ENCODE measurements at regions of chr20 and their contacts with region 1.

Region 1: GRCh38 chr20:62603021-62603906 is 39.0 kb upstream of the SLCO4A1 start:
- DNase-seq: peak; percentile 54 to 61
- ATAC-seq: peak; percentile 67 to 93 (median 76)
- H3K4me3 ChIP-seq: peak overlapping the region in 3 of 10 donors; percentile 2 to 41 (median 15)
- H3K27ac ChIP-seq: peak overlapping the region in 9 of 10 donors; percentile 9 to 86 (median 32)
- H3K4me1 ChIP-seq: peaks cover 7 to 63% (median 28%) of the 10 kb centered on the region in 9 donors
- H3K27me3 ChIP-seq: peaks cover 0 to 20% (median 3%) of the 10 kb centered on the region in 7 donors
- CTCF ChIP-seq: no peak

Region 2: GRCh38 chr20:62516345-62516744 is 86.9 kb before region 1 on chr20:
- intact Hi-C with region 1: loop called in 2 of 10 experiments (anchors 5 to 10 kb)
- DNase-seq: no peak
- ATAC-seq: peak in 6 of 8 donors; percentile 7 to 60 (median 42)
- H3K4me3 ChIP-seq: no peak overlapping the region
- H3K27ac ChIP-seq: no peak overlapping the region
- H3K4me1 ChIP-seq: peaks cover 0 to 16% (median 11%) of the 10 kb centered on the region in 9 donors
- H3K27me3 ChIP-seq: peaks cover 0 to 46% (median 22%) of the 10 kb centered on the region in 7 donors
- CTCF ChIP-seq: peak in 8 of 9 donors; percentile 14 to 60 (median 38)

Region 3: GRCh38 chr20:62590301-62591121 is 12.8 kb before region 1 on chr20:
- intact Hi-C with region 1: no loop called
- DNase-seq: no peak
- ATAC-seq: peak in 6 of 8 donors; percentile 29 to 51 (median 33)
- H3K4me3 ChIP-seq: no peak overlapping the region
- H3K27ac ChIP-seq: no peak overlapping the region
- H3K4me1 ChIP-seq: peaks cover 0 to 14% (median 3%) of the 10 kb centered on the region in 9 donors
- H3K27me3 ChIP-seq: peaks cover 1 to 67% (median 30%) of the 10 kb centered on the region in 7 donors
- CTCF ChIP-seq: no peak

Region 4: GRCh38 chr20:62642040-62642665 is 38.9 kb after region 1 on chr20 and contains the start of gene SLCO4A1:
- intact Hi-C with region 1: no loop called
- DNase-seq: peak; percentile 70 to 86
- ATAC-seq: peak; percentile 86 to 92 (median 88)
- H3K4me3 ChIP-seq: peak within 1 kb of the TSS; percentile 55 to 72 (median 66)
- H3K27ac ChIP-seq: peak within 1 kb of the TSS; percentile 64 to 90 (median 75)
- H3K4me1 ChIP-seq: peaks cover 12 to 56% (median 43%) of the 10 kb centered on the region in 9 donors
- H3K27me3 ChIP-seq: peaks cover 0 to 59% (median 20%) of the 10 kb centered on the region in 7 donors
- CTCF ChIP-seq: peak in 3 of 9 donors; percentile 6 to 35 (median 22)
- total RNA-seq, gene SLCO4A1: 1.5 to 34.3 (median 4.9) TPM